HCT116 (cell line): ENCODE measurements at regions of chr10 and their contacts with region 1.

Region 1: DNA sequence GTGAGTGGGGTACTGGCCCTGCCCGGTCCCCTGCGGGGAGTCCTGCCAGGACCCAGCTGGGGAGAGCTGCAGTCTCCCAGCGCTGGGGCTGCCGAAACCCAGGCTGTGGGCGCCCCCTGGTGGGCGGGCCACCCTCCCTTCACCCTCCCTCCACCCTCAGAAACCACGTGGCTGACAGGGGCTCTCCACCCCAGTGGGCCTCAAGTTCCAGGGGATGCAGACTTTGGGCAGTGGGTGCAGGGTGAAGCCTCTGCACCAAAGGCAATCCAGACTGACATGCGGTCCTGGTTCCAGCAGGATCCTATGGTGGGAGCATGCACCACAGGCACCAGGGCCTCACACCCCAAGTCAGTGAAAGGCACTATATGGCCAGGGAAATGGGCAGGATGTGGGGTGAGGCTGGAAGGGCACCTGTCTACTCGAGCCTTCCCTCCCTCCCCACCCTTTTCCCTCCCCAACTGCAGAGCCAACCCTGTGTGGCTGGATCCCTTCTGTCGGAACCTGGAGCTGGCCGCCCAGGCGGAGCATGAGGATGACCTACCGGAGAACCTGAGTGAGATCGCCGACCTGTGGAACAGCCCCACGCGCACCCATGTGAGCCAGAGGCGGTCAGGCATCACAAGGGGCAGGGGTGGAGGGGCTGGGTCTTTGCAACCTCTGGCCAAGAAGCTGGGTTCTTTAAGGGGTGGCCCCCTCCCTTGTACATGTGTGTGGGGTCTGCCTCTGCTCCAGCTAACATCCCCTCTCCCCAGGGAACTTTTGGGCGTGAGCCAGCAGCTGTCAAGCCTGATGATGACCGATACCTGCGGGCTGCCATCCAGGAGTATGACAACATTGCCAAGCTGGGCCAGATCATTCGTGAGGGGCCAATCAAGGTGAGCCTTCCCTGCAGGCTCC is 38.8 kb downstream of the PSAP start:
- DNase-seq: peak; percentile 10
- ATAC-seq: peak; percentile 95
- H3K4me3 ChIP-seq: no peak overlapping the region
- H3K27ac ChIP-seq: no peak overlapping the region
- H3K4me1 ChIP-seq: peaks cover 0 to 13% of the 10 kb centered on the region in 2 experiments; a peak in 2 of 4 replicates
- H3K27me3 ChIP-seq: no peaks in the 10 kb centered on the region
- CTCF ChIP-seq: peak; percentile 88 to 92 (median 89)
- POLR2A ChIP-seq: no peak
- RAD21 ChIP-seq: peak; percentile 96

Region 2: GRCh38 chr10:71314028-71314693 is 498.1 kb before region 1 on chr10:
- CTCF ChIA-PET with region 1: interaction called, 8 read pairs
- POLR2A ChIA-PET with region 1: no interaction called
- RAD21 ChIA-PET with region 1: interaction called in 1 of 2 experiments, 7 read pairs
- intact Hi-C with region 1: loop called (anchors 1 kb)
- DNase-seq: peak; percentile 21
- ATAC-seq: peak; percentile 70
- H3K4me3 ChIP-seq: no peak overlapping the region
- H3K27ac ChIP-seq: no peak overlapping the region
- H3K4me1 ChIP-seq: peaks cover 3 to 10% of the 10 kb centered on the region in 2 experiments; a peak in 2 of 4 replicates
- H3K27me3 ChIP-seq: no peaks in the 10 kb centered on the region
- CTCF ChIP-seq: peak; percentile 65 to 76 (median 72)
- POLR2A ChIP-seq: no peak
- RAD21 ChIP-seq: peak; percentile 85

Region 3: DNA sequence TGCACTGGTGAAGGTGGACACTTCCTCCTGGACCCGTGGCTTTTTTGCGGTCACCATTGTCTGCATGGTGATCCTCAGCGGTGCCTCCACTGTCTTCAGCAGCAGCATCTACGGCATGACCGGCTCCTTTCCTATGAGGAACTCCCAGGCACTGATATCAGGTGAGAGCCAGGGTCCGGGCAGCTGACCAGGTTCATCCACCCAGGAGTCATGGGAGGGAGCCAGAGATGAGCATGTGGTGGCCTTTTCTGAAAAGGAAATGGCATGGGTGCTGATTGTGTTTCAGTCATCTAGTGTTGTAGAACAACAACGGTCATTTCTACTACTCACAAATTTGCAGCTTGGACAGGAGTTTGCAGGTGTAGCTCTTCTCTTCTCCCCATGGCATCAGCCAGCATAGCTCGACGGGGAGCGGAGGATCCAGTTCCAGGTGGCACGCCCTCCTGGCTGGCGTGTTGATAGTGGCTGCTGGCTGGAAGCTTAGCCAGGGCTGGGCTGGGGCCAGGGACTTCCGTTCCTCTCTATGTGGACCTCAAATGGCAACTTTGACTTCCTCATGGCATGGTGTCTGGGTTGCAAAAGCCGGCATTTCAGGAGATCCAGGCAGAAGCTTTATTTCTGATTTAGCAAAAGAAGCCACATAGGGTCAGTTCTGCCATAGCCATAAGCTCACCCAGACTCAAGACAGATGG is 460.5 kb before region 1 on chr10:
- CTCF ChIA-PET with region 1: no interaction called
- POLR2A ChIA-PET with region 1: no interaction called
- RAD21 ChIA-PET with region 1: no interaction called
- intact Hi-C with region 1: no loop called
- DNase-seq: no peak
- ATAC-seq: no peak
- H3K4me3 ChIP-seq: no peak overlapping the region
- H3K27ac ChIP-seq: no peak overlapping the region
- H3K4me1 ChIP-seq: peaks cover 0 to 8% of the 10 kb centered on the region in 2 experiments; a peak in 3 of 4 replicates
- H3K27me3 ChIP-seq: no peaks in the 10 kb centered on the region
- CTCF ChIP-seq: no peak
- POLR2A ChIP-seq: no peak
- RAD21 ChIP-seq: no peak

Region 4: DNA sequence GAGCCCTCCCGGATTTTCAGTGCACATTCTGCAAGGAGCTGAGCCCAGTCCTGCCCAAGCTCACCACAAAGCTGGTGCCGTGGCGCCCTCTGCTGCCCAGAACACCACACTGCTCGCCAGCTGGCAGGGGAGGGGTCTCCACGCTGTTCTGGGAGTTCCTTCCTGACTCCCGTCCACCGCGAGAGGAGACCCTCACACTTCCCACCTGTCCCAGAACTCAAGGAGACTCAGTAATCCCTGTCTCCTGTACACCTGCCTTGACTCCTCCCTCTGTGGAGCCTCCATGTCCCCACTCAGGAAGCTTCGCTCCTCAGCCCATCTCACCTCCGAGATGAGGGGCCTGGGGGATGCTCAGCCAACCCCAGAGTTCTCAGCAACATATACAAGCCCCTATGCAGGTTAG is 104.0 kb before region 1 on chr10:
- CTCF ChIA-PET with region 1: interaction called, 12 read pairs
- POLR2A ChIA-PET with region 1: no interaction called
- RAD21 ChIA-PET with region 1: interaction called, 6 to 9 read pairs
- intact Hi-C with region 1: loop called (anchors 1 kb)
- DNase-seq: no peak
- ATAC-seq: peak; percentile 87
- H3K4me3 ChIP-seq: no peak overlapping the region
- H3K27ac ChIP-seq: no peak overlapping the region
- H3K4me1 ChIP-seq: 0 out of 4 replicates have a peak, but pooled peaks cover 0 to 4% of the 10 kb centered on the region in 2 experiments
- H3K27me3 ChIP-seq: no peaks in the 10 kb centered on the region
- CTCF ChIP-seq: peak; percentile 77 to 93 (median 89)
- POLR2A ChIP-seq: no peak
- RAD21 ChIP-seq: peak; percentile 93

Region 5: GRCh38 chr10:71742301-71743088 is 69.8 kb before region 1 on chr10:
- CTCF ChIA-PET with region 1: interaction called, 11 read pairs
- POLR2A ChIA-PET with region 1: no interaction called
- RAD21 ChIA-PET with region 1: no interaction called
- intact Hi-C with region 1: no loop called
- DNase-seq: no peak
- ATAC-seq: no peak
- H3K4me3 ChIP-seq: no peak overlapping the region
- H3K27ac ChIP-seq: no peak overlapping the region
- H3K4me1 ChIP-seq: peaks cover 5 to 19% of the 10 kb centered on the region in 2 experiments; a peak in 3 of 4 replicates
- H3K27me3 ChIP-seq: no peaks in the 10 kb centered on the region
- CTCF ChIP-seq: no peak
- POLR2A ChIP-seq: no peak
- RAD21 ChIP-seq: no peak

Region 6: DNA sequence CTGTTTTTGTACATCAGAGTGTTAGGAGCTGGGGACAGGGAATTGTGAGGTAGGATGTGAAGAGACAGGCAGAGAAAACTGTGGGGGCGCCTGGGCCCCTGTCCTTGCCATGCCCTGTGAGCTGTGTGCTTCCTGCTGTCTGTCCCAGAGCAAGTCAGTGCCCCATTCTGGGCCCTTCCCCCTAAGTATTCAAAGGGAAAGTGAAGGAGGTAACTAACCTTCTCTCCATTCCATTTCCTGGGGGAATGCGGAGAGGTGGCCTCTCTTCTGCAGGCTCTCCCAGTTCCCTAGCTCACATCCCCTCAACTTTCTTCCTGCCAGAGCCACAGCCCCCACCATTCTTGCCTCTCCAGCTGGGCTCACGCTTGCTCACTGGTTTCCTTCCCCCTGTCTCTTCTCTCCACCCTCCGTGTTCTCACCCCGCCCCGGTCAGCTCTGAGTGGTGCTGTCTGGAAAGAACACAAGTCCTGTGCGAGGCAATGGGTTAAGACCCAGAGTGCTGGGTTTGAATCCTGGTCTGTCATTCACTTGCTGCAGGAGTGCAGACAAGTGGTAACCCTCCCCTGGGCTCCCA is 29.3 kb before region 1 on chr10:
- CTCF ChIA-PET with region 1: no interaction called
- POLR2A ChIA-PET with region 1: no interaction called
- RAD21 ChIA-PET with region 1: no interaction called
- intact Hi-C with region 1: no loop called
- DNase-seq: no peak
- ATAC-seq: no peak
- H3K4me3 ChIP-seq: no peak overlapping the region
- H3K27ac ChIP-seq: no peak overlapping the region
- H3K4me1 ChIP-seq: no peaks in the 10 kb centered on the region
- H3K27me3 ChIP-seq: no peaks in the 10 kb centered on the region
- CTCF ChIP-seq: no peak
- POLR2A ChIP-seq: no peak
- RAD21 ChIP-seq: no peak

Region 7: DNA sequence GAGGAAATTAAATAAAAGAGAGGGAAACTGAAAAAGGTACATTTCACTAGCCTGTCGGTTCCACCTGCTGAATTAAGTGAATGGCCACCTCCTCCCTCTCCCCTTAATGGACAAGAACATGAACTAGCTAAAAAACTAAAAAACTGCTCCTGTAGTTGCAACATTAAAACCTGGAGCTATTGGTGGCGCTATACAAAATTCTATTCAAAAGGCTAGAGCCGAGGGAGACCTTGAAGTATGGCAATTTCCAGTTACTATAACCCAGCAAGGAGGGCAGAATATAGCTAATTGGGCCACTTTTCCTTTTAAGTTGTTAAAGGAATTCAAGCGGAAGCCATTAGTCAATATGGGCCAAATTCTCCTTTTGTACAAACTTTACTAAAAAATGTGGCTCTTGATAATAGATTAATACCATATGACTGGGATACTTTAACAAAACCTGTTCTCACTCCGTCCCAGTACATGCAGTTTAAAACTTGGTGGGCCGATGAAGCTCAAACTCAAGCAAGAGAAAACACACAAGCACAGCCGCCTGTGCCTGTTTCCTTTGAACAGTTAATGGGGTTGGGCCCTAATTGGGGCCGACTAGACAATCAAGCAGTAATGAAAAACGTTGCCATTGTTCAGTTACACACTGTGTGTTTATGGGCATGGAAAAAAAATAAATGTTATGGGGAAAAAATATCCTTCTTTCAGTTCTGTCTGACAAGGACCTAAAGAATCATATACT is 145.4 kb after region 1 on chr10:
- CTCF ChIA-PET with region 1: no interaction called
- POLR2A ChIA-PET with region 1: no interaction called
- RAD21 ChIA-PET with region 1: no interaction called
- intact Hi-C with region 1: no loop called
- DNase-seq: no peak
- ATAC-seq: no peak
- H3K4me3 ChIP-seq: no peak overlapping the region
- H3K27ac ChIP-seq: no peak overlapping the region
- H3K4me1 ChIP-seq: peaks cover 0 to 7% of the 10 kb centered on the region in 2 experiments; a peak in 2 of 4 replicates
- H3K27me3 ChIP-seq: no peaks in the 10 kb centered on the region
- CTCF ChIP-seq: peak in 1 of 3 experiments; percentile 27; a peak in 3 of 6 replicates
- POLR2A ChIP-seq: no peak
- RAD21 ChIP-seq: no peak